ENCODE measurements at regions of chr10 and their contacts with region 1.

Region 1: DNA sequence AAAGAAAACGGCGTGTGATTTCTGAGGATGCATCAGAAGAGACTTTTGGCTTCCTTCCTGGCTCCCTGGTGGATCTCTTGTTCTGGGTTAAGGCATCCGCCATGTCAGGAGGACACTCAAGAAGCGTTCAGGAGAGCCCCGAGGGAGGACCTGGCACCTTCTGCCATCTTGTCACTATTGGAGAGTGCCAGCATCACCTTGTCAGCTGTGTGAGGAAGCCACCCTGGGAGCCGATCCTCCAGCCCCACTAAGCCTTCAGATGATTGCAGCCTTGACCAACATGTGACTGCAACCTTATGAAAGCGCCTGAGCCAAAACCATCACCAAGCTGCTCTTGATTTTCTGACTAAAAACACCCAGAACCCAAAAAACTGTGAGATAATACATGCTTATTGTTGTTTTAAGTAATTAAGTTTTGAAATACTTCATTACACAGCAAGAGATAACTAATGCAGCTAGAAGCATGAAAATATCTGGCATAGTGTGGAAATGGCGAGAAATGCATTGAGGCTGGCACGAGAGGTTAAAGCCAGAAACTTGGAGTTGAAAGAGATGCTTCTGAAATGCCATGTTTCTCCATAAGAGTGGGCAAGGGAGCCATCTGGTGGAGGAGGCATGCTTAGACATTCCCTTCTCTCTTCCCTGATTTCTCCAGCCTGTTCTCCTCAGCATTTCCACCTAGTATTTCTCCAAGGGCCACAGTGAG is 5.4 kb upstream of the ZFYVE27 start:
- DNase-seq: peak; percentile 60 to 83 (median 65)
- H3K4me3 ChIP-seq: no peak overlapping the region
- H3K27ac ChIP-seq: no peak overlapping the region
- H3K4me1 ChIP-seq: no peaks in the 10 kb centered on the region
- H3K27me3 ChIP-seq: no peaks in the 10 kb centered on the region
- CTCF ChIP-seq: peak; percentile 46 to 91 (median 90)
- EP300 ChIP-seq: no peak
- POLR2A ChIP-seq: no peak

Region 2: DNA sequence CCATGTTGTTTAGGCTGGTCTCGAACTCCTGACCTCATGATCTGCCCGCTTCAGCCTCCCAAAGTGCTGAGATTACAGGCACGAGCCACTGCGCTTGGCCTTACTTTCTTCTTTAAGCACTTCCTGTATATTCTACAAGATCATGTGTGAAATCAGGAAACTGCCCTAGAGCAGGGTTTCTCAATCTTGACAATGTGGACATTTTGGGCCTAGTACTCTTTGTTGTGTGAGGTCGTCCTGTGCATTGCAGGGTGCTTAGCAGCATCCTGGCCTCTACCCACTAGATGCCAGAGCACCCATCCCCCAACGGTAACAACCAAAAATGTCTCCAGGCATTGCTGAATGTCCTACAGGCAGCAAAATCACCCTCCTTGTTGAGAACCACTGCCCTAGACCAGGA is 355.1 kb before region 1 on chr10:
- intact Hi-C with region 1: no loop called
- DNase-seq: no peak
- H3K4me3 ChIP-seq: no peak overlapping the region
- H3K27ac ChIP-seq: no peak overlapping the region
- H3K4me1 ChIP-seq: no peaks in the 10 kb centered on the region
- H3K27me3 ChIP-seq: no peaks in the 10 kb centered on the region
- CTCF ChIP-seq: no peak
- EP300 ChIP-seq: no peak
- POLR2A ChIP-seq: no peak

Region 3: GRCh38 chr10:97676770-97677581 is 54.5 kb before region 1 on chr10:
- intact Hi-C with region 1: loop called in 3 of 4 experiments (anchors 2 to 10 kb)
- DNase-seq: peak in 2 of 5 donors; percentile 23 to 48
- H3K4me3 ChIP-seq: no peak overlapping the region
- H3K27ac ChIP-seq: no peak overlapping the region
- H3K4me1 ChIP-seq: no peaks in the 10 kb centered on the region
- H3K27me3 ChIP-seq: no peaks in the 10 kb centered on the region
- CTCF ChIP-seq: peak; percentile 68 to 88 (median 79)
- EP300 ChIP-seq: no peak
- POLR2A ChIP-seq: no peak

Region 4: GRCh38 chr10:97701438-97702069 is 29.9 kb before region 1 on chr10:
- intact Hi-C with region 1: loop called in 2 of 4 experiments (anchors 2 to 5 kb)
- DNase-seq: peak in 1 of 5 donors; percentile 64
- H3K4me3 ChIP-seq: no peak overlapping the region
- H3K27ac ChIP-seq: no peak overlapping the region
- H3K4me1 ChIP-seq: no peaks in the 10 kb centered on the region
- H3K27me3 ChIP-seq: no peaks in the 10 kb centered on the region
- CTCF ChIP-seq: peak; percentile 47 to 75 (median 64)
- EP300 ChIP-seq: no peak
- POLR2A ChIP-seq: no peak

Region 5: GRCh38 chr10:97708976-97709946 is 22.2 kb before region 1 on chr10:
- intact Hi-C with region 1: loop called in 2 of 4 experiments (anchors 2 kb)
- DNase-seq: peak; percentile 82 to 92 (median 86)
- H3K4me3 ChIP-seq: no peak overlapping the region
- H3K27ac ChIP-seq: peak overlapping the region in 1 of 2 donors; percentile 23
- H3K4me1 ChIP-seq: peaks cover 6% of the 10 kb centered on the region
- H3K27me3 ChIP-seq: no peaks in the 10 kb centered on the region
- CTCF ChIP-seq: peak; percentile 47 to 68 (median 61)
- EP300 ChIP-seq: no peak
- POLR2A ChIP-seq: no peak

Measured in ovary (tissue), 10 donors.